Activated CD4-positive, alpha-beta T cell treated with anti-CD3 and anti-CD28 coated beads, Interleukin-2, amount 10 ng/mL, durations not matched to agents 24 days and 14 days (primary cell): ENCODE measurements at regions of chr9 and their contacts with region 1.

Region 1: DNA sequence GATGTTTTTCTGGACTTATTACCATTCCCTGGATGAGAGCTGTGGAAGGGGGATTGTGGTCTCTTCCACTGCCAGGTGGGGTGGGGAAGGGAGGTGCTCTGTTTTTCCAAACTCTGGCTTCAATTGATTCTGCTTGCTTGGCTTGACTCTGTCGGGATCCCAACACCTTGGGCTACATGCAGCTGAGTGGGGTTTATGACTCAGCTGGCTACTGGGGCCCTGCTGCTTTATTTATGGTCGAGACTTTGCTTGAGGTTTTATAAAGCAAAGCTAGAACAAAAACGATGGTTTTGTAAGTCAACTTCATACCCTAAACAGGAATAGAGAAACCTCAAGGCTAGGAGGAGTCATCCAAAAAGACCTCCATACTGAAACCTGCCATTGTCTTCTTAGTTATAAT is 76.3 kb downstream of the AOPEP start:
- DNase-seq: peak; percentile 63
- H3K4me3 Mint-ChIP-seq: no peak overlapping the region
- H3K27ac Mint-ChIP-seq: peak overlapping the region; percentile 45
- H3K4me1 Mint-ChIP-seq: peaks cover 28% of the 10 kb centered on the region
- H3K27me3 Mint-ChIP-seq: no peaks in the 10 kb centered on the region

Region 2: GRCh38 chr9:94839398-94839797 is 36.6 kb after region 1 on chr9:
- intact Hi-C with region 1: loop called (anchors 1 kb)
- DNase-seq: no peak
- H3K4me3 Mint-ChIP-seq: no peak overlapping the region
- H3K27ac Mint-ChIP-seq: peak overlapping the region; percentile 49
- H3K4me1 Mint-ChIP-seq: peaks cover 24% of the 10 kb centered on the region
- H3K27me3 Mint-ChIP-seq: no peaks in the 10 kb centered on the region

Region 3: DNA sequence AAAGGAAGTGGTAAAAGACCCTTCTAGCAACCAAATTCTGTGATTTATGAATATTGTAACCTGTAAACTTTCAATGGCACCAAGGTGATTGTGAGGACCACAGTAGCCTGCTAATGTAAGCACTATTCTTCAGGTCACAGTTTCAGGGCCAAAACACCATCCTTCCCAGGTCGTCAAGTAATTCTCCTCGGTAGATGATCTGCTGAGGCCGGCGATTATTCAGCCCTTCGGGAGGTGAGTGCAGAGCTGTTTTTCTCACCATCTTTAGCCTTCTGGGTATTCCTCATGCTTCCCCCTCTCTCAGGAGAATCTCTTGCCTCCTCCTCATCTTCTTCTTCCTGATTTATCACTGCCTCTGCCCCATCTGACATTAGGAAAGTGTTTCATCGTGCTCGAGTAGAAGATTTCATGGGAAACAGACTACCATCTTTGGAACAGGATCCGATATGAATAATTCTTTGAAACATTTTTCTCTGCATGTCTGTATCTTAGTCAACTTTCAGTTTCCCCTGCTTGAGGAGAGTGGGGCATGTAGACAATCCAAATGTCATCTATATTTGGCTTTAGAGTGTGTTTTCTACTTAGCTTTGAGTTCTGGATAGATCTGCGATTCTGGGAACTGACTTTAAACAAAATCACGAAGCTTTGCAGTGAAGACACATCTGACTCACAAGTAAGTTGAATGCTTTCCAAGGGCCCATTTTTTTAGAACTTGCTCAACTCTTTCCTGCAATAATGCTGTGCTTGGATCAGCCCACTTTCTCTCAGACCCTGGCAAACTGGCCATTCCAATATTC is 97.6 kb after region 1 on chr9:
- intact Hi-C with region 1: loop called (anchors 1 kb)
- DNase-seq: no peak
- H3K4me3 Mint-ChIP-seq: peak overlapping the region; percentile 36
- H3K27ac Mint-ChIP-seq: peak overlapping the region; percentile 83
- H3K4me1 Mint-ChIP-seq: peaks cover 27% of the 10 kb centered on the region
- H3K27me3 Mint-ChIP-seq: no peaks in the 10 kb centered on the region